ENCODE measurements at regions of chr17 and their contacts with region 1.

Region 1: GRCh38 chr17:42760652-42761581 is at the start of gene RAMP2:
- DNase-seq: no peak
- ATAC-seq: no peak
- H3K4me3 ChIP-seq: no peak within 1 kb of the TSS
- H3K27ac ChIP-seq: no peak within 1 kb of the TSS
- H3K4me1 ChIP-seq: peaks cover 0 to 8% of the 10 kb centered on the region in 2 experiments; a peak in 3 of 4 replicates
- H3K27me3 ChIP-seq: no peaks in the 10 kb centered on the region
- CTCF ChIP-seq: no peak
- POLR2A ChIP-seq: no peak
- RAD21 ChIP-seq: no peak
- total RNA-seq, gene RAMP2: not detected

Region 2: GRCh38 chr17:42720996-42721583 is 39.8 kb before region 1 on chr17:
- CTCF ChIA-PET with region 1: interaction called, 8 read pairs
- POLR2A ChIA-PET with region 1: no interaction called
- RAD21 ChIA-PET with region 1: interaction called in 1 of 2 experiments, 4 read pairs
- intact Hi-C with region 1: loop called (anchors 1 kb)
- DNase-seq: peak; percentile 46
- ATAC-seq: peak; percentile 88
- H3K4me3 ChIP-seq: no peak overlapping the region
- H3K27ac ChIP-seq: no peak overlapping the region
- H3K4me1 ChIP-seq: no peaks in the 10 kb centered on the region
- H3K27me3 ChIP-seq: no peaks in the 10 kb centered on the region
- CTCF ChIP-seq: peak; percentile 56 to 85 (median 72)
- POLR2A ChIP-seq: no peak
- RAD21 ChIP-seq: peak; percentile 78

Region 3: GRCh38 chr17:42773290-42774035 is 12.5 kb after region 1 on chr17 and contains the start of gene VPS25:
- CTCF ChIA-PET with region 1: interaction called, 24 read pairs
- POLR2A ChIA-PET with region 1: interaction called, 4 read pairs
- RAD21 ChIA-PET with region 1: no interaction called
- intact Hi-C with region 1: no loop called
- DNase-seq: peak; percentile 75
- ATAC-seq: peak; percentile 94
- H3K4me3 ChIP-seq: peak within 1 kb of the TSS; percentile 85 to 99
- H3K27ac ChIP-seq: peak within 1 kb of the TSS; percentile 65
- H3K4me1 ChIP-seq: peaks cover 8 to 12% of the 10 kb centered on the region in 2 experiments; a peak in 2 of 4 replicates
- H3K27me3 ChIP-seq: no peaks in the 10 kb centered on the region
- CTCF ChIP-seq: peak in 1 of 3 experiments; percentile 18; a peak in 1 of 6 replicates
- POLR2A ChIP-seq: peak; percentile 92
- RAD21 ChIP-seq: no peak
- total RNA-seq, gene VPS25: 57.0 TPM

Region 4: DNA sequence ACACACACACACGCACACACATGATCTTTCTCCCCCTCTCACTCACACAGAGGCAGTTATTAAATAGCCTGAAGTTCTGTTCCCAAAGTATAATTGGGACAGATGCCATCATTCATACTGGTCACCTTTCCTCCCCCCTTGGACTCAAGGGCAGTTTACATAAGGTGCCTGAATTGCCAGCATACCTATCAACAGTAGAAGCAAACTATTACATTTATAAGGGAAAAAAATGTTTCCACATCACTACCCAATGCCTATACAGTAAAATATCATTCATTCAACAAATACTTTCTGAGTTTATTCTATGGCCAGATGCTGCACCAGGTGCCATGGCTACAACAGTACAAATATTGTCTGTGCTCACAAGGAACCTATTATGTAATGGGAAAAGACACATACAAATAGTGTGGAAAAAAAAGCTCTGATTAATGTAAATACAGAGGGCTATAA is 44.0 kb after region 1 on chr17:
- CTCF ChIA-PET with region 1: interaction called, 5 read pairs
- POLR2A ChIA-PET with region 1: no interaction called
- RAD21 ChIA-PET with region 1: interaction called in 1 of 2 experiments, 11 read pairs
- intact Hi-C with region 1: no loop called
- DNase-seq: no peak
- ATAC-seq: no peak
- H3K4me3 ChIP-seq: no peak overlapping the region
- H3K27ac ChIP-seq: no peak overlapping the region
- H3K4me1 ChIP-seq: no peaks in the 10 kb centered on the region
- H3K27me3 ChIP-seq: no peaks in the 10 kb centered on the region
- CTCF ChIP-seq: no peak
- POLR2A ChIP-seq: no peak
- RAD21 ChIP-seq: no peak

Region 5: DNA sequence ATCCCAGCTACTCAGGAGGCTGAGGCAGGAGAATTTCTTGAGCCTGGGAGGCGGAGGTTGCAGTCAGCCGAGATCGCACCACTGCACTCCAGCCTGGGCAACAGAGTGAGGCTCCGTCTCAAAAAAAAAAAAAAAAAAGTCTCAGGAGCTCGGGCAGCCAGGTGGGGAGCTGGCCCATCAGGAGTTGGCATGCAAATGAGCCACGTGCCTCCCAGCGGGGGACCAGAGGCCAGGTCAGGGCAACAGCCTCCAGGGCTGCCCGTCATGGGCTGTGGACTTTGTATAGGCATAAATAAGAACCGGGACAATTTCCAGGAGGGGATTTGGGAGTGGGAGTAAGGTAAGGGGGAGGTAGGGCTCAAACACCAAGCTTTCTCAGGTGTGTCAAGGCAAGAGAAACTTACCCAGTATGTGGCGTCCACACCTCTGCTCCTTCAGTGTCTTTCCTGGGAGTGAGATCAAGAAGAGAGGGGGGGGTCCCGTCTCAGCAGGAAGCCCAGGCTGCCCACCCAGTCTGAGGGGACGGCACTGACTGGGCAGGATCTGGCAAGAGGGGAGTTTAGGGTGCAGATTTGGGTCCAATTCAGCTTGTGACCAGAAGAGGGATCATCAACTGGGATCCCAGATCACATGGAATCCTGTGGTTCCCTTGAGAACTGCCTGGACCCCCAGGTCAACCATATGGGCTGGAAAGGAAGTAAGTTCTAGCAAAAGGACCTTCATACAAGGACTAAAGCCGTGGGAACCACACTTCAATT is 117.4 kb after region 1 on chr17:
- CTCF ChIA-PET with region 1: no interaction called
- POLR2A ChIA-PET with region 1: no interaction called
- RAD21 ChIA-PET with region 1: no interaction called
- intact Hi-C with region 1: no loop called
- DNase-seq: no peak
- ATAC-seq: peak; percentile 58
- H3K4me3 ChIP-seq: no peak overlapping the region
- H3K27ac ChIP-seq: no peak overlapping the region
- H3K4me1 ChIP-seq: no peaks in the 10 kb centered on the region; a peak in 1 of 4 replicates
- H3K27me3 ChIP-seq: no peaks in the 10 kb centered on the region
- CTCF ChIP-seq: 0 out of 6 replicates have a peak, but pooled peaks of 2 of the 3 experiments have one; percentile 4 to 15
- POLR2A ChIP-seq: no peak
- RAD21 ChIP-seq: no peak

Region 6: DNA sequence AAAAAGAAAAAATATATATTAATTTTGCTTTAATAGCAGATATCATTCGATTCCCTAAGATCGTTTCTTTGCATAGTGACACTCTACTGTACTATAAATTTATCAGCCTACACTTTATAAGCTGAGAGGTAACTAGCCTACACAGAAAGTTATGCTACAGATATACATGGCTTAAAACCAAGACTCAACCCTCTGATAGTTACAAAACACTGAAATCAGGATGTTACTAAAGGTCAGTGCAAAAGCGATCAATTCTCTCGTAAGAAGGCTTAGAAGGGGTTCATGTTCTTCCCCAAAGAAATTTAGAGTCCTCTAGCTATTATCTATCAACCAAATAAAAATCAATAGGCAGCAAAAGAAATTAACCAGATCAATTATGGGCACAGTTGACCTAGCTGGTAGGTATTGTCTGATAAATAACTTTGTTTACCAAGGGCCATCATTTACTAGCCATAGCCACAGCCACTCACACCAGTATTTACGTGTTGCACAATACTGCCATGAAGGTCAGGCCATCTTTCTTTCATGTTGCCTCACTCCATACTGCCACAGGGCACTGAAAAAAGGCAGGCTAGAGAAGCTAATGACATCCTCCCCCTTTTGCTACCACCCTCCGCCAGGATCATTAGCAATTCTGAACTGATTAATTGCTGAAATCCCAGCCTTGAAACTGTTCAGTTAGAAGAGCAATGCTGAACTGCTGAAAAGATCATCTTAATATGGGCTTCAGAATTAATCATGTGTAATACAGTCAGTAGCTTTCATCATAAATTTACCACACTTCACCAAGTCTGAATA is 307.9 kb after region 1 on chr17:
- CTCF ChIA-PET with region 1: no interaction called
- POLR2A ChIA-PET with region 1: no interaction called
- RAD21 ChIA-PET with region 1: no interaction called
- intact Hi-C with region 1: no loop called
- DNase-seq: no peak
- ATAC-seq: no peak
- H3K4me3 ChIP-seq: no peak overlapping the region
- H3K27ac ChIP-seq: no peak overlapping the region
- H3K4me1 ChIP-seq: no peaks in the 10 kb centered on the region
- H3K27me3 ChIP-seq: no peaks in the 10 kb centered on the region
- CTCF ChIP-seq: no peak
- POLR2A ChIP-seq: no peak
- RAD21 ChIP-seq: no peak

Measured in HCT116 (cell line).